MCF 10A (cell line): ENCODE measurements at regions of chr7 and their contacts with region 1.

Region 1: GRCh38 chr7:25069900-25070443 is 55.1 kb downstream of the CYCS start:
- DNase-seq: peak; percentile 70
- H3K4me3 Mint-ChIP-seq: no peak overlapping the region
- H3K27ac Mint-ChIP-seq: no peak overlapping the region
- H3K4me1 Mint-ChIP-seq: peaks cover 8% of the 10 kb centered on the region
- H3K27me3 Mint-ChIP-seq: no peaks in the 10 kb centered on the region
- CTCF ChIP-seq: peak; percentile 85

Region 2: GRCh38 chr7:24764972-24765744 is 304.8 kb before region 1 on chr7:
- CTCF ChIA-PET with region 1: no interaction called
- POLR2A ChIA-PET with region 1: no interaction called
- intact Hi-C with region 1: no loop called
- DNase-seq: no peak
- H3K4me3 Mint-ChIP-seq: no peak overlapping the region
- H3K27ac Mint-ChIP-seq: no peak overlapping the region
- H3K4me1 Mint-ChIP-seq: no peaks in the 10 kb centered on the region
- H3K27me3 Mint-ChIP-seq: no peaks in the 10 kb centered on the region
- CTCF ChIP-seq: no peak

Region 3: DNA sequence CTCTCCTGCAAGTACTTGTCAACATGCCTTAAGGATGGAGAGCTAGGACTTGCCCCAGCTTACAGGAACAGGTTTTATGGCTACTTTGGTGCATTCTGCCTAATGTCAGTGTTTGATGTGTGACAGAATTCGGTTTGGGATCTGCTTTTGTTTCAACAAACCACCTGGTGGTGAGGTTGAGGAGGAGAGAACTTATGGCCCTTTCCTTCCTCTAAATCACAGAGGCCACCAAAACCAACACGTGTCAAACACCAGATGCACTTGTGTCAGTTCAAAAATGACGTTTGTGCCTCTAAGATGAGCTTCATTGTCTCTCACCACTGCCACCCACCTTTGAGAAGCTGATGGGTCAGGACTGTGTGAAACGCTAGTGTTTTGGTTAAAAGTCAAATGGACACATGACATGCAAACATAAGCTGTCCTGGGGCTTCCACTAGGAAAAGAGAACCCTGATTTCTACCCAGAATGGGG is 173.9 kb before region 1 on chr7:
- CTCF ChIA-PET with region 1: interaction called, 4 read pairs
- POLR2A ChIA-PET with region 1: no interaction called
- intact Hi-C with region 1: loop called (anchors 2 kb)
- DNase-seq: no peak
- H3K4me3 Mint-ChIP-seq: no peak overlapping the region
- H3K27ac Mint-ChIP-seq: no peak overlapping the region
- H3K4me1 Mint-ChIP-seq: peaks cover 20% of the 10 kb centered on the region
- H3K27me3 Mint-ChIP-seq: no peaks in the 10 kb centered on the region
- CTCF ChIP-seq: no peak

Region 4: DNA sequence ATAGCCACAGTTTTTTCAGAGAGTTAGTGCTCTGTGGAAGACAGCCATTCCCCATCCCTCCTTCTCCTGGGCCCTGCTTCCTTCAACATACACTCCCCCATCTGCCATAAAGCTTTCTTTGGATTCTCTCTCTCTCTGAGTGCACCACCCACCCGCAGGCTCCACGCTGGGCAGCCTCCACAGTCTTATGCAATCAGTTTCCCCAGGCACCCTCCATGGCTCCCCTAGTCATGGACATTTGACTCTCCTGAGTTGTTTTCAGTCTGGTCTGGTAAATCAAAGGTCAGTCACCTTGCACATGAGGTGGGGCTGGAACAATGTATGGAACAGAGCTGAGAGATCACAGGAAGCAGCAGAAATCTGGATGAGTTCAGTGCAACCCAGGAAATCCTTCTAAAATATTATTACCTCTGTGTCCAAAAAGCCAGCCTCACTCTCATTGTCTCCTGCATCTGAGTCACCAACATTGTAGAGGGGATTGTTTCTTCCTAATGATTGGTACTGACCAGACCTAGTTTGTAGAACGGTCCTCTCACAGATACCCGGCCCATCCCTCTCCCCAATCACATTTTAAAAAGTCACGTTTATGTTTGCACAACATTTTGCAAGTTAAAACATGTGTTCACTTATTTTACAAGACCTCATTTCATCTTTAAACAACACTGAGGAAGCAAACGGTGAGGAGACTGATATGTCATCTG is 15.0 kb before region 1 on chr7:
- CTCF ChIA-PET with region 1: interaction called, 10 read pairs
- POLR2A ChIA-PET with region 1: interaction called, 3 read pairs
- intact Hi-C with region 1: no loop called
- DNase-seq: no peak
- H3K4me3 Mint-ChIP-seq: no peak overlapping the region
- H3K27ac Mint-ChIP-seq: no peak overlapping the region
- H3K4me1 Mint-ChIP-seq: peaks cover 9% of the 10 kb centered on the region
- H3K27me3 Mint-ChIP-seq: no peaks in the 10 kb centered on the region
- CTCF ChIP-seq: no peak